GM12878 (cell line): ENCODE measurements at regions of chrX and their contacts with region 1.

Region 1: GRCh38 chrX:70769659-70770232 is 138.8 kb downstream of the TEX11 start:
- DNase-seq: no peak
- ATAC-seq: no peak
- H3K4me3 ChIP-seq: no peak overlapping the region
- H3K27ac ChIP-seq: no peak overlapping the region
- H3K4me1 ChIP-seq: no peaks in the 10 kb centered on the region
- H3K27me3 ChIP-seq: no peaks in the 10 kb centered on the region
- CTCF ChIP-seq: peak in 1 of 3 experiments; percentile 32; a peak in 3 of 6 replicates
- EP300 ChIP-seq: no peak
- POLR2A ChIP-seq: no peak
- RAD21 ChIP-seq: 0 out of 2 replicates have a peak, but pooled peaks have one; percentile 21

Region 2: GRCh38 chrX:70476934-70477733 is 292.6 kb before region 1 on chrX:
- CTCF ChIA-PET with region 1: no interaction called
- POLR2A ChIA-PET with region 1: no interaction called
- RAD21 ChIA-PET with region 1: no interaction called
- SMC1A ChIA-PET with region 1: no interaction called
- in situ Hi-C with region 1: no loop called
- intact Hi-C with region 1: no loop called
- DNase-seq: no peak
- ATAC-seq: no peak
- H3K4me3 ChIP-seq: no peak overlapping the region
- H3K27ac ChIP-seq: no peak overlapping the region
- H3K4me1 ChIP-seq: no peaks in the 10 kb centered on the region
- H3K27me3 ChIP-seq: no peaks in the 10 kb centered on the region
- CTCF ChIP-seq: no peak
- EP300 ChIP-seq: no peak
- POLR2A ChIP-seq: no peak
- RAD21 ChIP-seq: no peak

Region 3: GRCh38 chrX:70978928-70979762 is 209.4 kb after region 1 on chrX:
- CTCF ChIA-PET with region 1: no interaction called
- POLR2A ChIA-PET with region 1: no interaction called
- RAD21 ChIA-PET with region 1: interaction called, 5 read pairs
- SMC1A ChIA-PET with region 1: no interaction called
- in situ Hi-C with region 1: no loop called
- intact Hi-C with region 1: loop called (anchors 2 kb)
- DNase-seq: no peak
- ATAC-seq: peak; percentile 79
- H3K4me3 ChIP-seq: no peak overlapping the region
- H3K27ac ChIP-seq: no peak overlapping the region
- H3K4me1 ChIP-seq: no peaks in the 10 kb centered on the region
- H3K27me3 ChIP-seq: no peaks in the 10 kb centered on the region
- CTCF ChIP-seq: peak; percentile 24 to 40 (median 37); a peak in 4 of 6 replicates
- EP300 ChIP-seq: no peak
- POLR2A ChIP-seq: no peak
- RAD21 ChIP-seq: 0 out of 2 replicates have a peak, but pooled peaks have one; percentile 17

Region 4: GRCh38 chrX:70998411-70999027 is 228.8 kb after region 1 on chrX:
- CTCF ChIA-PET with region 1: no interaction called
- POLR2A ChIA-PET with region 1: no interaction called
- RAD21 ChIA-PET with region 1: no interaction called
- SMC1A ChIA-PET with region 1: no interaction called
- in situ Hi-C with region 1: no loop called
- intact Hi-C with region 1: no loop called
- DNase-seq: no peak
- ATAC-seq: peak; percentile 59
- H3K4me3 ChIP-seq: no peak overlapping the region
- H3K27ac ChIP-seq: no peak overlapping the region
- H3K4me1 ChIP-seq: no peaks in the 10 kb centered on the region
- H3K27me3 ChIP-seq: no peaks in the 10 kb centered on the region
- CTCF ChIP-seq: peak; percentile 30 to 49 (median 38); a peak in 4 of 6 replicates
- EP300 ChIP-seq: no peak
- POLR2A ChIP-seq: no peak
- RAD21 ChIP-seq: peak; percentile 70